ENCODE measurements at regions of chr1 and their contacts with region 1.

Region 1: DNA sequence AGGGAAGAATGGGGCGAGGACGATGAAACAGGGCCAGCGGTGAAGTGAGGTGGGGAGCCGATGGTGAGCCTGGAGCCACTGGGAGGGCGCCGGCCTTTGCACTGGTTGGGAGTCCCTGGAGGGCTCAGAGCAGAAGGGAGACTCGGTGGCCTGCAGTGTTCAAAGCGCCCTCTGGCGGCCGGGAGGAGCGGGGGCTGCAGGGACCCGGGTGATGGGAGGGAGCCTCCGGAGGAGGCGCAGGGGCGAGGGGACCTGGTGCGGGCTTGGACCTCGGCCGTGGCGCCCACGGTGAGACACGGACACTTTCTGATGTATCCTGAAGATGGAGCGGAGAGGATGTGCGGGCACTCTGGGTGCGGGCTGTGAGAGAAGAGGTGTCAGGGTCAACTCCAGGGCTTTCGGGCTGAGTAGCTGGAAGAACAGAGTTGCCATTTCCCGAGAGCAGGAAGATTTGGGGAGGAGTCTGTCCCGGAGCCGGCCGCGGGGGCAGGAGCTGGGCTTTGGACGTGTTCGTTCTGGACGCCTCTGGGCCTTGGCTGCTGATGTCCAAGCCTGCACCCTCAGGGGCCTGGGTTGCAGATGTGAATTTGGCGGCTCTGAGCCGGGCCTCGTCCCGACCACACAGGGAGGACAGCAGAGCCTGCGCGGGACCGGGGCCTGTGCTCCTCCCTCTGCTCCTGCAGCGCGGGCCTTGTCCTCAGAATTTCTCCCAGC is 29.7 kb downstream of the HEYL start:
- DNase-seq: no peak
- H3K4me3 ChIP-seq: peak overlapping the region; percentile 7 to 18
- H3K27ac ChIP-seq: no peak overlapping the region
- H3K4me1 ChIP-seq: no peaks in the 10 kb centered on the region
- H3K27me3 ChIP-seq: no peaks in the 10 kb centered on the region
- CTCF ChIP-seq: peak; percentile 40 to 54 (median 41)
- POLR2A ChIP-seq: no peak

Region 2: DNA sequence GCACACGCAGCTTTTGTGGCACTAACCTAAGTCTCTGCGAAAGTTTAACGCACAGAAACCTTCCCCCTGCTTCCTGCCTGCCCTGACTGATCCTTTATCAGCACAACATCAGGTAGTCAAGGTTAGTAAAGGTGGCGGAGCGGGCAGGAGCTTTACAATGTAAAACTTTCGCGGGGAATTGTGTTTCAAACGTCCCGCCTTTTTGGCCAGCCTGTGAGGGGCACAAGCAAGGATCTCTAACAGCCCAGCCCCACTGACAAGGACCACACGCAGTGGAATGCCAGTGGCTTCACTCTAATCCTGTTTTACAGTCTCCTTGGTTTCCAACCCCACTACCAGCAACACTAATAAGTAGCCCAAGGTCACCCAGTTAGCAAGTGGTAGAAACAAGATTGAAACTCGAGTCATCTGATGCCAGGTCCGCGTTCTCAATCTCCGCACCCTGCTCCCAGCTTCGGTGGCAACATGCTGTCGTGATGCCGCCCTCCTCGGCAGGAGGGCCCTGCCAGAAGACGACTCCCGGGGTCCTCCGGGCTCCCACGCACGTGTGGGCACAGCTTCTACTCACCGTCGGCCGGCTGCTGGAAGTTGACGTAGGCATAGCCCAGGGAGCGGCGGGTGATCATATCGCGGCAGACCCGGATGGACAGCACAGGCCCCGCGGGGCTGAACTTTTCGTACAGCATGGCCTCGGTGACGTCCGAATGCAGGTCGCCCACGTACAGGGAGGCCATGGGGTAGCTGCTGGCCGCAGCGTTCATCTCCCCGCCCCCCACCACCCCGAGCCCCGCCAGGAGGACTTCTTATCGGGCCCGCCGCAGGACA is 34.4 kb before region 1 on chr1:
- intact Hi-C with region 1: no loop called
- DNase-seq: no peak
- H3K4me3 ChIP-seq: peak overlapping the region; percentile 93 to 97
- H3K27ac ChIP-seq: peak overlapping the region; percentile 81
- H3K4me1 ChIP-seq: peaks cover 37% of the 10 kb centered on the region
- H3K27me3 ChIP-seq: no peaks in the 10 kb centered on the region
- CTCF ChIP-seq: no peak
- POLR2A ChIP-seq: no peak

Region 3: DNA sequence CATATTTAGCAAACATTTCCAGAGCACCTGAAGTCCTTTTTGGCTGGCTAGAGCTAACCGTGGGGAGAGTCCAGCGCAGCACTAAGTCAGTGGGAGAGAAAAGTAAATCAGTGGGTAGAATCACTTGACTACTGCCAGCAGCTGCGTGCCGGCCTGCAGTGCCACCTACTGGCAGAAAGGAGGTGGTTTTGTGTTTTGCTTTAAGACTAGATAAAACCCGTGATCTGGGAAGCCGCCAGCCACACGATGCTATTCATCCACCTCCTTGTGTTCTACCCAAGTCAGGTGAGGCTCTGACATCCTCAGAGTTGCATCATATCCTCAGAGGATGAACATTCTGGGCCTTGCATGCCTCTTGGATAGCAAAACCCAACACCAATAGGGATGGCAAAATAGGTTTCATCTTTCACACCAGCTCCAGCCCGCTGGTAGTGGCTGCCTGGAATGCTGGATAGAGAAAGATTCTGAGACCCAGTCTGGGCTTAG is 43.8 kb after region 1 on chr1:
- intact Hi-C with region 1: loop called (anchors 5 kb)
- DNase-seq: no peak
- H3K4me3 ChIP-seq: no peak overlapping the region
- H3K27ac ChIP-seq: no peak overlapping the region
- H3K4me1 ChIP-seq: no peaks in the 10 kb centered on the region
- H3K27me3 ChIP-seq: no peaks in the 10 kb centered on the region
- CTCF ChIP-seq: peak; percentile 86 to 96 (median 93)
- POLR2A ChIP-seq: no peak

Region 4: GRCh38 chr1:39717809-39718208 is 108.0 kb after region 1 on chr1:
- intact Hi-C with region 1: loop called (anchors 5 kb)
- DNase-seq: peak in 1 of 2 donors; percentile 47
- H3K4me3 ChIP-seq: no peak overlapping the region
- H3K27ac ChIP-seq: no peak overlapping the region
- H3K4me1 ChIP-seq: no peaks in the 10 kb centered on the region
- H3K27me3 ChIP-seq: no peaks in the 10 kb centered on the region
- CTCF ChIP-seq: no peak
- POLR2A ChIP-seq: no peak

Measured in vagina (tissue), 2 donors.